GM10248 (cell line): ENCODE measurements at regions of chr14 and their contacts with region 1.

Region 1: GRCh38 chr14:91996948-91997371 is 42.9 kb downstream of the TRIP11 start:
- DNase-seq: peak; percentile 29
- CTCF ChIP-seq: peak; percentile 49

Region 2: DNA sequence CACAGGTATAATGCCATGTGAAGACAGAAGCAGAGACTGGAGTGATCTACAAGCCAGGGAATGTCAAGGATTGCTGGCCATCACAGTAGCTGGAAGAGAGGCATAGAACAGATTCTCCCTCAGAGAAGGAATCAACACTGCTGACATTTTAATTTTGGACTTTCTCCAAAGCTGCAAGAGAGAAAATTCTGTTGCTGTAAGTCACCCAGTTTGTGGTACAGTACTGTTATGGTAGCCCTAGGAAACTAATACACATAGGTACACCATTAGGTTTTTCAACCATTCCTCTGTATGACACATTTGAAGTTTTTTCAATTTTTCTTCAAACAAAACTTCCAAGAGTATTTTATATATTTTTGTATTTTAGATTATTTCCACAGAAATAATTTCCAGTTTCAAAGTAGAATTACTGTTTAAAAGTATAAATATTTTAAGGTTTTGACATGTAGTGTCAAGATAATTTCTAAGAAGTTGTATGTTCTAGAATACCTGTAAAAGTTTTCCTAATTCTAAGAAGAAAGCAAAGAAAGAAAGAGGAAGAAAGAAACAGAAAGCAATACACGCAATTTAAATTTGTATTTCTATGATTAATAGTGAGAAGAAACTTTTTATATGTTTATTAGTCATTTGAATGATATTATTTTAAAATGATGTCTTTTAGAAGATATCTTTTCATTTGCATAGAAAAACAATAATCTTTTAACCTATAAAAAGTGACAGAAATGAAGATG is 200.2 kb before region 1 on chr14:
- CTCF ChIA-PET with region 1: no interaction called
- POLR2A ChIA-PET with region 1: no interaction called
- DNase-seq: no peak
- CTCF ChIP-seq: no peak

Region 3: GRCh38 chr14:91985521-91986255 is 11.3 kb before region 1 on chr14:
- CTCF ChIA-PET with region 1: interaction called, 13 read pairs
- POLR2A ChIA-PET with region 1: no interaction called
- DNase-seq: no peak
- CTCF ChIP-seq: no peak

Region 4: GRCh38 chr14:92012121-92012748 is 15.3 kb after region 1 on chr14:
- CTCF ChIA-PET with region 1: interaction called, 21 read pairs
- POLR2A ChIA-PET with region 1: no interaction called
- DNase-seq: no peak
- CTCF ChIP-seq: no peak

Region 5: DNA sequence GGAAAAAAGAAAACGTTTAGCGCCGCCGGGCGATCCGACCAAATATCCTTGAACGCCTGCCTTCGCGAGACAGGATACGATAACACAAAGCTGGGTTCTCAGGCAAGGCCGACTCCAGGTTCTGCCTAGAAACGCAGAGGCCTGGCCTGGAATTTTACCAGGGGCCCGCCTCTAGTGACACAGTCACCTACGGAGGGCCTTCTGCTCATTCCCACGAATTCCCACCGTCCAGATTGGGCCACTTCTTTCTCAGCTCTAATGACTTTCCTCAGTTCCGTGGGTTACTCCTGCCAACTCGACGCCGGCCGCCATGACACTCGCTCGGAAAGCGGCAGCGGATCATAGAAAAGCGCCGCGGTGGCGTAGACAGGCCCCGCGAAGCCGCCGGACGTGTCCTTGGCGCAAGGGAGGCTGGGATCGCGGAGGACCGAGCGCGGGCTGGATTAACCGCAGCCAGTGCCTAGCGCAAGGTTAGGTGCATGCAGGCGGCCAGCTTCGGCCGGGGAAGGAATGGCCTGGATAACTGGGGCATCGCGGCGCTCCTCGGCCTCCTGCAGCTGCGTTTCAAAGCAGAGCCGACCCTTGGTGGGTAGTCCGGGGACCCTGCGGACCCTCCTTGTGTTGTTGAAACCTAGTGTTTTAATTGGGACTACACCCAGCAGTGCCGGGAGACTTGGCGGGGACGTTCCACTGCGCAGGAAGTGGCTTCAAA is 42.9 kb after region 1 on chr14 and contains the start of gene TRIP11:
- CTCF ChIA-PET with region 1: interaction called, 10 read pairs
- POLR2A ChIA-PET with region 1: no interaction called
- DNase-seq: peak; percentile 94
- CTCF ChIP-seq: no peak